GM13976 (cell line): ENCODE measurements at regions of chr19 and their contacts with region 1.

Region 1: DNA sequence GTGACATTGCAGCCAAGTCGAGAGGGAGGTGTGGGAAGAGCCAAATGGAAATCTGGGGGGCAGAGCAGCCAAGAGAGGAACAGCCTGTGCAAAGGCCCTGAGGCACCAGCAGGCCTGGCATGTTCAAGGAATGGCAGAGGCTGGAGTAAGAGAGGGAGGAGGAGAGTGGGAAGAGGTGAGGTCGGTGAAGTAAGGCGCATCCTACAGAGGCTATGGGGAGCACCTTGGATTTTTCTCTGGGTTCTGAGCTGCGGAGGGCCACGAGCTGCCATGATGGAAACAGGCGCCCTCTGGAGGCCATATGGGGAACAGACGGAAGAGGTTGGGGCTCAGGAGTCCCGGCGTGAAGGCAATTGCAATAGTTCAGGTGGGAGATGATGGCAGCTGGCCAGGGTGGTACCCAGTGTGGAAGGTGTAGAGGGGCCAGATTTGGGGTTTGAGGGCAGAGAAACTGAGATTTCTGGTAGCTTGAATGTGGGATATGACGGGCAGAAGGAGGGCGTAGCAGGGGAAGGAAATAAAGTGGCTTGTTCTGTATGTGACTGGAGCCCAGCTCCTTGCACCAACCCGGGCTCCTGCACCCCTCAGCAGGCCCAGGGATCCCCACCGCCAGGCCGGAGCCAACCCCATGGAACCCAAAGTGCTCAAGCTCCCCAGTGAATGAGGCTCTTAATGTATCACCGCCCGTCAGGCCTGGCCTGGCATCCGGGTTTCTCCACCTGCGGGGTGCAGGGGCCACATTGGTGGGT is 20.5 kb upstream of the STRN4 start:
- DNase-seq: peak; percentile 78
- CTCF ChIP-seq: peak; percentile 70

Region 2: DNA sequence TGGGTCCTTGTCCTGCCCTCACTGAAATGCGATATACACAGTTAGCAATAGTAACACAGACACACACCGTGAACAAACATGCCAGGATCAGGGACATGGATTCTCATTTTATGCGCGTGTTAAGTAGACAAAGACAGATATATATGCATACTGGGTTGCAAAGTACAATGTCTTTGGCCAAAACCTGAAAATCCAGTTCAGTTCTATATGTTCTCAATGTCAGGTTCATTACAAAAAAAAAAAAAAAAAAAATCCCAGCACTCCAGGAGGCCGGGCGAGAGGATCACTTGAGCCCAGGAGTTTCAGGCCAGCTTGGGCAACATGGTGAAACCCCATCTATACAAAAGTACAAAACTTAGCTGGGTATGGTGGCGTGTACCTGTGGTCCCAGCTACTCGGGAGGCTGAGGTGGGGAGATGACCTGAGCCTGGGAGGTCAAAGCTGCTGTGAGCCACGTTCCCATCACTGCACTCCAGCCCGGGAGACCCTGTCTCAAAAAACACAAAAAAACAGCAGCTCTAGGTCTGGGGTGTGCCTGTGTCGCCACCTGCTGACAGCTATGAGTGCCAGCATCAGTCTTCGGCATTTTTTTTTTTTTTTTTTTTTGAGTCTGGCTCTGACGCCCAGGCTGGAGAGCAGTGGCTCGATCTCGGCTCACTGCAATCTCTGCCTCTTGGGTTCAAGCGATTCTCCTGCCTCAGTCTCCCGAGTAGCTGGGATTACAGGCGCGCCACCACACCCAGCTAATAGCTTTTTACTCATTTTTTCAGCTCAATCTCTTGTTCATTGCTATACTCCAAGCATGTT is 73.6 kb after region 1 on chr19:
- in situ Hi-C with region 1: loop called (anchors 10 kb)
- DNase-seq: peak; percentile 79
- CTCF ChIP-seq: peak; percentile 61